ENCODE measurements at regions of chr17 and their contacts with region 1.

Region 1: DNA sequence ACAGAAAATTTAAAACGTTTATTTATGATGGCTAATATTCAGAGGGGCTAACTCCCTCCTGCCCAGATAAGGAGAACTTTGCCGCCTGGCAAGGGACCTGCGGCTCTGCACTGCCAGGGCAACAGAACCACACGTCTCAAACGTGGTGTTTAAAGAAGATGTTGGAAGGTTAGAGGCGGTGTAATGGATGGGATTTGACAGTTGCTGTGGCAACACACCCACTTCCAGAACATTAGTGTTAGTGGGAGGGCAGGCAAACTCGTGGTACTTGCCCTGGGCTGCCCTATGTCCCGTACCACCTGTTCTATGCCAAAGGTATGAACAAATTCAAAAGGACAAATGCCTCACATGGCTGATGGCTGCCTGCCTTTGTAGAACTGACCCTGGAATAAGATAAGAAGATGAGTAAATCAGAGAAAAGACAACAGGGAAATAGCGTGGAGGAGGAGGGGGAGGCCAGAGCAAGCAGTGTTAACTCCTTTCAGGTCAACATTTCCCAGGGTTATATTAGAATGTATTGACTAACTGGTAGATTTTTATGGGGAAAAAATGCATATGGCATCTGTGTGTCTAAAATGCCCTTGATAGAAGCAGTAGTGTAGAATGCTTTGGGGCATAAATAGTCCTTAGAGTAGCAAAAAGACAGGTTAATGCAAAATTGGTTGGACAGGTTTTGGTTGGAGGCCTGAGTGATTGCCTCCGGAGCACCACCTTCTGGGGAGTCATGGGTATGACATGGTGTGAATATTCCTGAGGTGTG is 30.8 kb downstream of the HLF start:
- DNase-seq: peak; percentile 32
- H3K4me3 Mint-ChIP-seq: no peak overlapping the region
- H3K27ac Mint-ChIP-seq: no peak overlapping the region
- H3K4me1 Mint-ChIP-seq: no peaks in the 10 kb centered on the region
- H3K27me3 Mint-ChIP-seq: peaks cover 6% of the 10 kb centered on the region

Region 2: GRCh38 chr17:54992797-54993639 is 302.6 kb before region 1 on chr17:
- intact Hi-C with region 1: loop called (anchors 1 kb)
- DNase-seq: no peak
- H3K4me3 Mint-ChIP-seq: no peak overlapping the region
- H3K27ac Mint-ChIP-seq: no peak overlapping the region
- H3K4me1 Mint-ChIP-seq: peaks cover 4% of the 10 kb centered on the region
- H3K27me3 Mint-ChIP-seq: no peaks in the 10 kb centered on the region

Region 3: DNA sequence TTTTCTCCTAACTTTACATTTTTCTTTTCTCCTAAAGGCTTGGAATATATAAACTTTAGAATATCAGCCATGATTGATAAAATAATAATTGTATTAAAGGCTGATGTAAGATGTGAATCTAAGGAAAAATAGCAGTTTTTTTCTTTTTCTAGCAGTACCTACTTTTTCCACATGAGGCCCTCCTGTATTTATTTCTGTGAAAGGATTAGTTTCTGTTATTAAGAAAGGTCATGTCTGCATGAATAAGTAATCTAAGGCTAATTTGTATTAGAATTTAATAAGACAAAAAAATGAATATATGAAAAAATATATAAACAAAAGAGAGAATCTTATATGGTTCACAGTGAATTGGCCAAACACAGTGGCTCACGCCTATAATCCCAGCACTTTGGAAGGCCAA is 241.7 kb before region 1 on chr17:
- intact Hi-C with region 1: loop called (anchors 1 kb)
- DNase-seq: no peak
- H3K4me3 Mint-ChIP-seq: no peak overlapping the region
- H3K27ac Mint-ChIP-seq: no peak overlapping the region
- H3K4me1 Mint-ChIP-seq: no peaks in the 10 kb centered on the region
- H3K27me3 Mint-ChIP-seq: no peaks in the 10 kb centered on the region

Region 4: DNA sequence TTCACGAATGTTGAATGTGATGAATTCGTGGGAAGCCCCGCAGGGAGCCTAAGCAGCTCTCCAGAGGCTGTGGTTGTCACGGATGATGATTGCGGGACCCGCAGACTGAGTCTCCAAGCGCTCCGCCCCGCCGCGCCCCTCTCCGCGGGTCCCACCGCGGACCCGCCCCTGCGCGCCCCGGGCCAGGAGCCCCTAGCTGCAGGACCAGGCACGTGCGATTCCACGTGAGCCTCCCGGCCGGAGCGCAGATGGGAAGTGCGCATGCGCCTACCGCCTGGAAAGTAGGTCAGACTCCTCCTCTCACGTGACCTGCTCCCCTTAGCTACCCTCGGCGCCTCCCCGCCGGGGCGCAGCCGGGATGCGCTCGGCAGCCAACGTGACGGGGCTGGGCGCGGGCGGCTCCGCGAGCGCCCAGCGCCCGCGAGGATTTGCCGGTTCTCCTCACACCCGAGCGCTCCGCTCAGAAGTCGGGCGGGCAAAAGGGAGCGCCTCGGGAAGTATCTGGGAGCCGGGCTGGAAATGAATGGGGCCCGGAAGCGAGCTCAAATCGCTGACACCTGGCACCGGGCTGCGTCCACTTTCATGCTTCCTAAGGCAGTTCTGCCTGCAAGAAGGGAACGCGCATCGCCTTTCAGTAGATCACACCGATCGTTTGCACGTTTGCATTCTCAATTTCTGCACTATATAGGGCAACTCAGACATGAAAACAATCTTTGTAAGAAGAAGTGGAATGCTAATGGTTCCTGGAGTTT is 57.2 kb before region 1 on chr17:
- intact Hi-C with region 1: loop called (anchors 2 kb)
- DNase-seq: peak; percentile 75
- H3K4me3 Mint-ChIP-seq: peak overlapping the region; percentile 81
- H3K27ac Mint-ChIP-seq: peak overlapping the region; percentile 69
- H3K4me1 Mint-ChIP-seq: peaks cover 17% of the 10 kb centered on the region
- H3K27me3 Mint-ChIP-seq: peaks cover 34% of the 10 kb centered on the region

Region 5: GRCh38 chr17:55356434-55357328 is 61.1 kb after region 1 on chr17:
- intact Hi-C with region 1: loop called (anchors 1 kb)
- DNase-seq: peak; percentile 51
- H3K4me3 Mint-ChIP-seq: no peak overlapping the region
- H3K27ac Mint-ChIP-seq: no peak overlapping the region
- H3K4me1 Mint-ChIP-seq: no peaks in the 10 kb centered on the region
- H3K27me3 Mint-ChIP-seq: peaks cover 21% of the 10 kb centered on the region

Region 6: DNA sequence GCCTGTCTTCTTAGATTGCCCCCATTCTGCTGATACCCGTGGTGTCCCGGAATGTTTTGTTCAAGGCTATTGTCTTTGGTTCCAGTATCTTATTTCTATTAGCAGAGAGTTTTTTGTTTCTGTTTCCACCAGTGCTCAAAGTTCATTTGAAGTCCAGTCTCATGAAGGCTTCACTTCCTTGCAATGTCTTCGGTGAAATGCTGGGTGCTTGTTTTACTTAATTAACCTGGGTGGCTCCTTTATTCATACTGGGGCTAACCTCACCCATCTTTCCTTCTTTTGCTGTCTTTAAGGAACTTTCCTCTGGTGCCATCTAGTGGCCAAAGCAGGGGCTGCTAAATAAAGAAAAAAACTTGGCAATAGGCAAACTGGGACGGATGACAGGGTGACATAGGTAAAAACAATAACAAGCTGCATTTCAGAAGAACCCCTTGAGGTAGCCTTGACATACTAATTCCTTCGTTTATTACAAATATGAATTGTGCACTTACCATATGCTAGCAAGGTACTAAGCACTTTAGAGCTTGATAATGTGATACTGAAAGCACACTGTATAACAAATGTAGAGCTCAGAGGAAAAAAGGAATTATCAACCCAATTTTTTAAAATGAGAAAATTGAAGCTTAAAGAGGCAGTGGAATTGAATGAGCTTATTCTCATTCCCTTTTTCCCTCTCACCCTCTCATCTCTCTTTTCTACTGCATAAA is 218.4 kb after region 1 on chr17:
- intact Hi-C with region 1: loop called (anchors 1 kb)
- DNase-seq: peak; percentile 56
- H3K4me3 Mint-ChIP-seq: no peak overlapping the region
- H3K27ac Mint-ChIP-seq: no peak overlapping the region
- H3K4me1 Mint-ChIP-seq: peaks cover 4% of the 10 kb centered on the region
- H3K27me3 Mint-ChIP-seq: peaks cover 9% of the 10 kb centered on the region